ENCODE measurements at regions of chr6 and their contacts with region 1.

Region 1: DNA sequence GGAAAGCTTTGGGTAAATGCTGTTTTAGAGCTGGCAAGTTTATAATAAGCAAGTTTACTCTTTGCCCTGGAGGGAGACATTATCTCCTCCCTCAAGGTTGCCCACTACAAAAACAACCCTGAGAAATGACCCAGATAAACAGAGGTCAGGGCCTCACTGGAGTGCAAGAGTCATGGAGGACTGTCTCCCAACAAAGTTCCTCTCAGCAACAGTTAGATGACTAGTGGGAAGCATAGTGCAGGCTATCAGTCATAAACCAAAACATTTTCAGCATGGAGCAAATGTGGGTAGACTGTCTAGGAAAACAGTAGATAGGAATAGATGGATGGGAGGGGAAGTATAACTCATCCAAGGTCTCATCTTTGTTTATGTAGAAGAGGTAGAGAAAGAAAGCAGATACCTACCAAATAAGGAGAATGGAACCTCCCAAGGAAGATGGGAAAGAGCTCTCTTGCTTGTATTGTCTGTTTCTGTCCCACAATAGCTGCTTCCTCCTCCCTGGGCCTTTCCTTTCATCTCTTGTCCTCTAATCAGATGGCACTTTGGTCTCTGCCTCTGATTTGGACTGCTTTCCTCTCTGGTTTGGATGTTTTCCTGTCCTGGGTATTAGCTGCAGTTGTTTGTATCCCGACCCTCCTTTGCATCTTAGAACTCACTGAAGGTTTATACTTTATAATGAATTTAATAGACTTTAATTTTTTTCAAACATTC is 95.4 kb downstream of the WASF1 start:
- DNase-seq: no peak
- H3K4me3 ChIP-seq: no peak overlapping the region
- H3K27ac ChIP-seq: no peak overlapping the region
- H3K27me3 ChIP-seq: no peaks in the 10 kb centered on the region
- CTCF ChIP-seq: no peak

Region 2: GRCh38 chr6:110114004-110114403 is 30.0 kb after region 1 on chr6:
- CTCF ChIA-PET with region 1: interaction called, 11 read pairs
- POLR2A ChIA-PET with region 1: no interaction called
- DNase-seq: no peak
- H3K4me3 ChIP-seq: no peak overlapping the region
- H3K27ac ChIP-seq: no peak overlapping the region
- H3K27me3 ChIP-seq: no peaks in the 10 kb centered on the region
- CTCF ChIP-seq: no peak